B cell (primary cell): ENCODE measurements at regions of chr12 and their contacts with region 1.

Region 1: DNA sequence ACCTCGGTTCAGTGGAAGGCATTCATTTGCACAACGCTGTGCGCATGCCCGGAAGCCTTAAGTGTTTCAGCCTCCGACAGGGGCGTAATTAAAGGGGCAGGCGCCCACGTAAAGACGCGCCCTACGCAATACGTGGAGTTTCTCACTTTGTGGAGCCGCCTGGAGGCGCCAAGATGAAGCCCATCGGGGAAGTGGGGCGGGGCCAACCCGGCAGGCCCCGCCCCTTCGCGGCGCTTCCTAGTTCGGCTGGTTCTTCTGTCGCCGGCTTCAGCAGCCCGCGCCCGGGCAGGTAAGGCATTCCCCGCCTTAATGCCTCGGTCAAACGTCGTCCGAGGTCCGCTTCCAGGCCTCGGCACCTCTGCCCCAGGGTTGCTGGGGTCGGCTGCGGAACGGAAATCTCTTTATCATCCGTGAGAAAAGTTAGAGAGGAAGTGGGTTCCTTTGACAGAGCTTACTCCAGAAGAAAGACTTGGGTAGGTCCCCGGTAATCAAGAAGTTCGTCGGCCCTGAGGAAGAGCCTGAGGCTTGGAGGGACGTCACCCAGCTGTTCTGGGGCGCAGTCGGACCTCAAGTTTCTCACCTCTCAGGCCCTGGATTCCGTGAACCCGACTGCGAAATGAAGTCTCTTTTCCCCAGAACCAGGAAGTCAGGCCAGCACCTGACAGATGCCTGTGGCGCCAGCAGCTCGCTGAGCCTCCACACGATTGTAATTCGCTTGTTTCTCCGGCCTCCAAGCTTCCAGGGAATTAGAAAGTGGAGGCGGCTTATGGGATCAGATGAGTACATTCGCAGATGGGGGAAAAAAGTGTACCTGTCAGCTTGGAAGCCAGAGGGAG is at the starts of genes IRAK4 and PUS7L:
- DNase-seq: peak; percentile 98
- ATAC-seq: peak; percentile 99
- H3K4me3 ChIP-seq: peak within 1 kb of the TSS; percentile 79 to 98 (median 92)
- H3K4me3 Mint-ChIP-seq: peak within 1 kb of the TSS; percentile 97
- H3K27ac ChIP-seq: peak within 1 kb of the TSS; percentile 95 to 96
- H3K27ac Mint-ChIP-seq: peak within 1 kb of the TSS; percentile 91
- H3K4me1 ChIP-seq: peaks cover 36% of the 10 kb centered on the region in 2 donors
- H3K4me1 Mint-ChIP-seq: peaks cover 70% of the 10 kb centered on the region
- H3K27me3 ChIP-seq: no peaks in the 10 kb centered on the region
- H3K27me3 Mint-ChIP-seq: no peaks in the 10 kb centered on the region
- CTCF ChIP-seq: peak; percentile 35
- total RNA-seq, gene IRAK4: 47.0 and 52.7 TPM in 2 replicates
- total RNA-seq, gene PUS7L: 23.5 and 24.2 TPM in 2 replicates

Region 2: DNA sequence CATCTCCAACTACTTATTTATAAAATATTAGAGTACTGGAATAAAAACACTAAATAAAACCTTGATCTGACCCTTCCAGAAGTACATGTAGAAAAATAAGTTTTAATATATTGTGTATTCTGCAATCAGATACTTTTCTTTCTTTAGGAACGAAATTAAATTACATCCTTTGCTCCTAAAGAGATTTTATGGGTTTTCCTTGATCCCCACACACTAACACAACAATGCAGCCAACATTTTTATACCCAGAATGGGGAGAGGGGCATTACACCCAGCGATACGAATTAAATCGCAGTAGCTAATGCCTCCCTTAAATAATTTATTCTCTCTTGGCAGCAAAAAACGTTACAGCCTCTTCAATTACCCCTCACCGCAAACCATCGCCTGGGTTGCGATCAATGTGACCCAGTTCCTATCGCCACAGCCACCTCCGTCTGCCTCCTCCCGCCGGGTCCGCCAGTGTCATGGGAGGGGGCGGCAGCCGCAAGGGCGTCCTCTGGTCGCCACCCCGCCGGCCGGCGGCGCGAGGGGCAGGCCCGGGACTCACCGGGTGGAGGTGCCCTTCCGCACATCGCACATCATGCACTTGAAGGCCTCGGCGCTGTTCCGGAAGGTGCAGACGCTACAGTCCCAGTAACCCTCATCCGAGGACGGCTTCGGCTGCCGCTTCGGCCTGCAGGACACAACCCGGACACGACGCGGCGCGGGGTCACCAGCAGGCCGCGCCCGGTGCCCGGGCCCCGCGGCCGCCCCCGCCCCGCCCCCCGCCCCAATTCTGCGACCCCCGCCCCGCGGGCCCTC is 1521.7 kb before region 1 on chr12:
- CTCF ChIA-PET with region 1: no interaction called
- POLR2A ChIA-PET with region 1: no interaction called
- intact Hi-C with region 1: loop called (anchors 2 kb)
- DNase-seq: peak; percentile 84
- ATAC-seq: peak; percentile 74
- H3K4me3 ChIP-seq: peak overlapping the region; percentile 48 to 84 (median 66)
- H3K4me3 Mint-ChIP-seq: peak overlapping the region; percentile 98
- H3K27ac ChIP-seq: peak overlapping the region; percentile 28 to 74
- H3K27ac Mint-ChIP-seq: peak overlapping the region; percentile 95
- H3K4me1 ChIP-seq: peaks cover 15 to 27% of the 10 kb centered on the region in 2 donors
- H3K4me1 Mint-ChIP-seq: peaks cover 35% of the 10 kb centered on the region
- H3K27me3 ChIP-seq: no peaks in the 10 kb centered on the region
- H3K27me3 Mint-ChIP-seq: no peaks in the 10 kb centered on the region
- CTCF ChIP-seq: peak; percentile 53

Region 3: GRCh38 chr12:42469355-42470175 is 1289.4 kb before region 1 on chr12:
- CTCF ChIA-PET with region 1: no interaction called
- POLR2A ChIA-PET with region 1: no interaction called
- intact Hi-C with region 1: loop called (anchors 5 kb)
- DNase-seq: peak; percentile 93
- ATAC-seq: peak; percentile 91
- H3K4me3 ChIP-seq: peak overlapping the region; percentile 23 to 45 (median 33)
- H3K4me3 Mint-ChIP-seq: peak overlapping the region; percentile 81
- H3K27ac ChIP-seq: peak overlapping the region; percentile 81 to 87
- H3K27ac Mint-ChIP-seq: peak overlapping the region; percentile 93
- H3K4me1 ChIP-seq: peaks cover 69 to 78% of the 10 kb centered on the region in 2 donors
- H3K4me1 Mint-ChIP-seq: peaks cover 76% of the 10 kb centered on the region
- H3K27me3 ChIP-seq: no peaks in the 10 kb centered on the region
- H3K27me3 Mint-ChIP-seq: no peaks in the 10 kb centered on the region
- CTCF ChIP-seq: no peak

Region 4: GRCh38 chr12:43396671-43397070 is 362.3 kb before region 1 on chr12:
- CTCF ChIA-PET with region 1: no interaction called
- POLR2A ChIA-PET with region 1: no interaction called
- intact Hi-C with region 1: no loop called
- DNase-seq: no peak
- ATAC-seq: no peak
- H3K4me3 ChIP-seq: no peak overlapping the region
- H3K4me3 Mint-ChIP-seq: no peak overlapping the region
- H3K27ac ChIP-seq: no peak overlapping the region
- H3K27ac Mint-ChIP-seq: no peak overlapping the region
- H3K4me1 ChIP-seq: no peaks in the 10 kb centered on the region
- H3K4me1 Mint-ChIP-seq: no peaks in the 10 kb centered on the region
- H3K27me3 ChIP-seq: no peaks in the 10 kb centered on the region
- H3K27me3 Mint-ChIP-seq: no peaks in the 10 kb centered on the region
- CTCF ChIP-seq: no peak

Region 5: DNA sequence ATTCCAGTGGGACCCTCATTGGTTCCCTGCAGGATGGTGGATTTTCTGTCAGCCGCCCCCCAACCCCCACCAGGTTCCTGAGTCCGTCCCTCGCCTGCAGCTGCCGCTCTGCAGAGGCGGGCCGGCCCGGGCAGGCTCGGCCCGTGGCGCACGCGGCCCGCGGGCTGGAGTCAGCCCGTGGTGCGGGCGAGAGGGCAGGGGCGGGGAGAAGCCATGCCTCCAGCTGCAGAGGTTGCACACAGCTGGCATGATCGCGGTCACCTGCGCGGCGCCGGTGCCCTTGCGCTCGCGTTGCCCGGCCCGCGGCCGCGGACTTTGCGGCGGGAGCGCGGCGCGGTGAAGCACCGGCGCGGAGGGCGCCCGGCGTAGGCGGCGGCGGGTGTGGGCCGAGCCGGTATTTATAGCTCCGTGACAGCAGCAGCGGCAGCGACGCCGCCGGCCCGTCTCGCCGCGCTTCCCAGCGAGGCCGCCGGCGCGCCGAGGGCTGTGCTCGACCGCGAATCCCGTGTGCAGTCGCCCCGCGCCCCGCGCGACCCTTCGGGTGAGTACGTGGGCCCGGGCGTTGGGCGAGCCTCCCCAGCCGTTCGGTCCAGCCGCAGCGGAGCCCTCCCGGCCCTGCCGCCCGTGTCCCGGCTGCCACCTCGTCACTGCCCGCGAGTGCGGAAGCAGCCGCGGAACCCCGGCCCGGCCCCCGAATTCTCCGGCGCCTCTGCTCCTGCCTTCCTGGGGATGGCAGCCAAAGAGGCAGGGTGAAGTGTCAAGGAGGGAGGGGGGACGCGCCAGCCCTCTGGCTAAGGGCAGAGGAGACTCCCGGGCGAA is 76.9 kb after region 1 on chr12 and contains the start of gene TMEM117:
- CTCF ChIA-PET with region 1: no interaction called
- POLR2A ChIA-PET with region 1: no interaction called
- intact Hi-C with region 1: loop called (anchors 1 kb)
- DNase-seq: peak; percentile 85
- ATAC-seq: peak; percentile 73
- H3K4me3 ChIP-seq: peak within 1 kb of the TSS; percentile 50 to 80 (median 73)
- H3K4me3 Mint-ChIP-seq: peak within 1 kb of the TSS; percentile 90
- H3K27ac ChIP-seq: peak within 1 kb of the TSS; percentile 79 to 93
- H3K27ac Mint-ChIP-seq: peak within 1 kb of the TSS; percentile 91
- H3K4me1 ChIP-seq: peaks cover 12% of the 10 kb centered on the region in 2 donors
- H3K4me1 Mint-ChIP-seq: peaks cover 19% of the 10 kb centered on the region
- H3K27me3 ChIP-seq: no peaks in the 10 kb centered on the region
- H3K27me3 Mint-ChIP-seq: no peaks in the 10 kb centered on the region
- CTCF ChIP-seq: no peak
- total RNA-seq, gene TMEM117: 10.4 and 10.7 TPM in 2 replicates

Region 6: GRCh38 chr12:45215419-45216229 is 1456.7 kb after region 1 on chr12 and contains the start of gene ANO6:
- CTCF ChIA-PET with region 1: no interaction called
- POLR2A ChIA-PET with region 1: no interaction called
- intact Hi-C with region 1: loop called (anchors 5 kb)
- DNase-seq: peak; percentile 85
- ATAC-seq: peak; percentile 73
- H3K4me3 ChIP-seq: peak within 1 kb of the TSS; percentile 65 to 96 (median 91)
- H3K4me3 Mint-ChIP-seq: peak within 1 kb of the TSS; percentile 96
- H3K27ac ChIP-seq: peak within 1 kb of the TSS; percentile 37 to 68
- H3K27ac Mint-ChIP-seq: peak within 1 kb of the TSS; percentile 89
- H3K4me1 ChIP-seq: peaks cover 14% of the 10 kb centered on the region in 2 donors
- H3K4me1 Mint-ChIP-seq: peaks cover 51% of the 10 kb centered on the region
- H3K27me3 ChIP-seq: no peaks in the 10 kb centered on the region
- H3K27me3 Mint-ChIP-seq: no peaks in the 10 kb centered on the region
- CTCF ChIP-seq: no peak
- total RNA-seq, gene ANO6: 18.7 and 19.5 TPM in 2 replicates